ENCODE measurements at regions of chr16 and their contacts with region 1.

Region 1: DNA sequence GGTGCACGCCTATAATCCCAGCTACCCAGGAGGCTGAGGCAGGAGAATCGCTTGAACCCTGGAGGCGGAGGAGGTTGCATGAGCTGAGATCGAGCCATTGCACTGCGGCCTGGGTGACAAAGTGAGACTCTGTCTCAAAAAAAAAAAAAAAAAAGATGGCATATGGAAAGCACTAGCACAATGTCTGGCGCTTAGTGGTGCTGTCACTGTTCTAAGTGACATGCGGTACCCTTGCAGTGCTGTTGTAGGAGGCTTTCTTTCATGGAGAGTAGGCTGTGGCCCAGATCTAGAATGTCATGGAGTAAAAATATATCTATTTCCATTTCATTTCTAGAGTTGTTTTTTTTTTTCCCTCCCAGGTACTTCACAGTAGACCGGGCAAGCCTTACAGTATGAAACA is 14.6 kb upstream of the METTL9 start:
- DNase-seq: no peak
- ATAC-seq: no peak
- H3K4me3 ChIP-seq: no peak overlapping the region
- H3K27ac ChIP-seq: no peak overlapping the region
- H3K4me1 ChIP-seq: no peaks in the 10 kb centered on the region
- H3K27me3 ChIP-seq: peaks cover 2 to 6% of the 10 kb centered on the region in 2 experiments; a peak in 3 of 5 replicates
- CTCF ChIP-seq: no peak
- EP300 ChIP-seq: no peak
- POLR2A ChIP-seq: no peak
- RAD21 ChIP-seq: no peak

Region 2: DNA sequence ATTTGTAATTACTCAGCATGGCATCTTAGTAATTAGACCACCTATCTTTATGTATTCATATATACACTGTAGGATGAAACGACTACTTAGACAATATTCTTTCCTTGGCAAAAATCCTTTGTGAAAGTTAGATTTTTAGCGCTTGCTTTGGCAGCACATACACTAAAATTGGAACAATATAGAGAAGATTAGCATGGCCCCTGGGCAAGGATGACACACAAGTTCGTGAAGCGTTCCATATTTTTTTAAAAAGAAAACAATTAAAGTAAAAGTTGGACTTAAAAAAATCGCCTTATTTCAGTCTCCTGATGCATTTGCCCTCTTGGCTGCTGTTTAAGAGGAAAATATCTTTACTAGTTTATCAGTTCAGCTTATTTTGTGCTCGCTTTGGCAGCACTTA is 57.1 kb after region 1 on chr16:
- CTCF ChIA-PET with region 1: interaction called, 34 read pairs
- POLR2A ChIA-PET with region 1: interaction called, 3 read pairs
- in situ Hi-C with region 1: loop called (anchors 5 kb)
- intact Hi-C with region 1: loop called (anchors 1 kb)
- DNase-seq: no peak
- ATAC-seq: no peak
- H3K4me3 ChIP-seq: no peak overlapping the region
- H3K27ac ChIP-seq: no peak overlapping the region
- H3K4me1 ChIP-seq: no peaks in the 10 kb centered on the region; a peak in 3 of 5 replicates
- H3K27me3 ChIP-seq: no peaks in the 10 kb centered on the region
- CTCF ChIP-seq: no peak
- EP300 ChIP-seq: no peak
- POLR2A ChIP-seq: no peak
- RAD21 ChIP-seq: no peak

Region 3: GRCh38 chr16:21646721-21647561 is 62.1 kb after region 1 on chr16:
- CTCF ChIA-PET with region 1: interaction called, 3 read pairs
- POLR2A ChIA-PET with region 1: interaction called, 3 read pairs
- in situ Hi-C with region 1: loop called (anchors 5 kb)
- intact Hi-C with region 1: no loop called
- DNase-seq: no peak
- ATAC-seq: no peak
- H3K4me3 ChIP-seq: no peak overlapping the region
- H3K27ac ChIP-seq: no peak overlapping the region
- H3K4me1 ChIP-seq: no peaks in the 10 kb centered on the region; a peak in 2 of 5 replicates
- H3K27me3 ChIP-seq: no peaks in the 10 kb centered on the region
- CTCF ChIP-seq: no peak
- EP300 ChIP-seq: no peak
- POLR2A ChIP-seq: no peak
- RAD21 ChIP-seq: no peak

Region 4: DNA sequence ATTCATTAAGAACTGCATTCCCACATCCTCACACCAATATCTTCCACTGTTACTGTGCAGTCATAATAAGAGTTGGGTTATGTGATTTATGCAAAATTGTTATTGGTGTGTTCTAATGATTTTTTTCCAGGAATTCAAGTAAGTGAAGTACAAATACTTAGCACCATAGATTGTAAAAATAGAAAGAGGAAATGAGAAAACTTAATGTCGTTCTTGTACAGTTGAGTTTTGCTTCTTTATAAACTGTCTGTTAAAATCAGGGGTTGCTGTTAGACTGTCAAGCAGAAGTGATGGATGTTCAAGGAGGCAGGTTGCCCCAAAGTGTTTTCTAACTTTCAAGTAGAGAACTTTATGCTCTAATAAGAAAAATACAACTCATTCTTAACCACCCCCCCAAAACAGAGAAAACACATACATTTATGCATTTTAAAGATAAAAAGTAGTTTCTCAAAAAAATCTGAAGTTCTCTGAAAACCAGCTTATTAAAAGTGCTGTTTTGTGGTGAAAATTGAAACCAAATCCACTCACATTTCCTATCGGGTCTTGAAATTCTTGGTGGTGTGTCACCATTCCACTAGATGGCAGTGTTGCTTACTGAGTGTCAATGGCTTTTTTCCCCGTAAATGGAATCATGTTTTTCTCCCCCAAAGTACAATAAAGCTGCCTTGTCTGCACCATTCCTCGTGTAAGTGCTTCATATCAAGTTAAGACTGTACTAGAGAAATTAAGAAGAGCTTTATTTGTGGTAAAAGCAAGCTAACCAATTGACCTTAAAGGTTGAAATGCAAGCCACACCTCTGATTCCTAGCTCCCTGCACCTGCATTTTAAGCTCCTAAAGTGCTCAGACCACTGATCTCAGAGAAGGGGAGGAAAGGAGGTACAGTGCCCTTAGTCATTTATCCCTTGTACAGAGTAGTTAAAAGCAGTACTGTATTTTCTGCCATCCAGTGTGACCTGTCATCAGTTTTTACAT is 72.3 kb after region 1 on chr16:
- CTCF ChIA-PET with region 1: interaction called, 3 read pairs
- POLR2A ChIA-PET with region 1: no interaction called
- in situ Hi-C with region 1: no loop called
- intact Hi-C with region 1: loop called (anchors 1 kb)
- DNase-seq: peak; percentile 64 to 72 (median 68)
- ATAC-seq: peak; percentile 67
- H3K4me3 ChIP-seq: no peak overlapping the region
- H3K27ac ChIP-seq: no peak overlapping the region
- H3K4me1 ChIP-seq: no peaks in the 10 kb centered on the region
- H3K27me3 ChIP-seq: no peaks in the 10 kb centered on the region
- CTCF ChIP-seq: peak; percentile 66 to 87 (median 82)
- EP300 ChIP-seq: no peak
- POLR2A ChIP-seq: no peak
- RAD21 ChIP-seq: peak; percentile 46 to 77; a peak in 3 of 4 replicates

Region 5: DNA sequence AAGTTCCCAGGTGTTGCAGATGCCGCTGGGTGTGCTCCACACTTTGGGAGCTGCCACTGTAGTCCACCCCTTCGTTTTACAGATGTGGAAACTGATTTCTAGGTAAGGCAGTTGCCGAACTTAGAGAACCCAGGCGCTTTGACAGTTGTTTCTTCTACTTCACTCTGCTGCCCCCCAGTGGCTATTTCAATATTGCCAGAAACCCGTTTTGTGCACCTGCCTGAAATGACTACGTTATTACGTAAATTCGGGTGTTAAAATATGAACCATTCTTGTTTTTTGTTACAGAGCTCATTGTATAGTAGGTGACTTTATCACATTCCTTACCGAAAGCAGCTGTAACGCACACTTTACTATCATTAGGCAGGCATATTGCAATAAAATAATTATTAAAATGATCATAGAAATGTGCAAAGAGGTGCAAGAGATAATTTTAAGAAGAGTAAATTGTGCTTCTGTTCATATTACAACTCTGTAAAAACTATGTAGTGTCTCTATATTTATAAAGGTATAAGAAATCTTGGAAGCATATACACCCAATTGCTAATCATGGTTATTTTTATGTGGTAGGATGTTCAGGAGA is 123.8 kb after region 1 on chr16:
- CTCF ChIA-PET with region 1: interaction called, 22 read pairs
- POLR2A ChIA-PET with region 1: no interaction called
- in situ Hi-C with region 1: loop called (anchors 5 kb)
- intact Hi-C with region 1: loop called (anchors 1 kb)
- DNase-seq: peak; percentile 68 to 75 (median 72)
- ATAC-seq: peak; percentile 81
- H3K4me3 ChIP-seq: no peak overlapping the region
- H3K27ac ChIP-seq: no peak overlapping the region
- H3K4me1 ChIP-seq: no peaks in the 10 kb centered on the region; a peak in 1 of 5 replicates
- H3K27me3 ChIP-seq: peaks cover 3 to 17% of the 10 kb centered on the region in 2 experiments; a peak in 3 of 5 replicates
- CTCF ChIP-seq: peak; percentile 79 to 92 (median 82)
- EP300 ChIP-seq: no peak
- POLR2A ChIP-seq: no peak
- RAD21 ChIP-seq: peak; percentile 68 to 88

Region 6: DNA sequence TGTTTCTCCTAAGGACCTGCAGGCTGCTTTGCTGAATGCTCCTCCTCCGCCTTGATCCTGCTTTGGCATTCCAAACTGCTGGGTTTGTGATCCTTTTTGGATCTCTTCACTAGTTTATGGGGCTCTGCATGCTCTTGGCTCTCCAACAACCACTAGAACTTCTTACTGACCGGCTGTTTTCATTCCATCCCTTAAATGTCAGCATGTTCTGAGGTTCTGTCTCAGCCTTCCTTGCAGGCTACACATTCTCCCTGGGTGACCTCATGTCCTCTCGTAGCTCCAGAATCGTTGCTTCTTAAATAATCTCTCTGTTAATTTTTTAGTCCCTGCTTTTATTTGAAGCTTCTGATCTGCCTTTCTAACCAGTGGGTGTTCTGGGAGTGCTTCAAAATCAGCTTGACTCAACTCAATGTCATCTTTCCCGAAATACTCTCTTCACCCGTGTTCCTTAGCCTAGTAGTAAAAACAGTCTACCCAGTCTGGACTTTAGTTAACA is 1110.1 kb after region 1 on chr16:
- CTCF ChIA-PET with region 1: no interaction called
- POLR2A ChIA-PET with region 1: interaction called, 3 read pairs
- in situ Hi-C with region 1: loop called (anchors 5 kb)
- intact Hi-C with region 1: no loop called
- DNase-seq: no peak
- ATAC-seq: no peak
- H3K4me3 ChIP-seq: no peak overlapping the region
- H3K27ac ChIP-seq: no peak overlapping the region
- H3K4me1 ChIP-seq: no peaks in the 10 kb centered on the region
- H3K27me3 ChIP-seq: peaks cover 6 to 13% of the 10 kb centered on the region in 2 experiments; a peak in 3 of 5 replicates
- CTCF ChIP-seq: no peak
- EP300 ChIP-seq: no peak
- POLR2A ChIP-seq: no peak
- RAD21 ChIP-seq: no peak